Transverse colon (tissue), 4 donors: ENCODE measurements at regions of chr10 and their contacts with region 1.

Region 1: GRCh38 chr10:18594574-18595156 is 56.7 kb downstream of the NSUN6 start:
- DNase-seq: peak; percentile 11
- H3K4me3 ChIP-seq: no peak overlapping the region
- H3K27ac ChIP-seq: no peak overlapping the region
- H3K4me1 ChIP-seq: no peaks in the 10 kb centered on the region
- H3K27me3 ChIP-seq: no peaks in the 10 kb centered on the region
- CTCF ChIP-seq: peak in 2 of 5 experiments; percentile 8 to 10
- EP300 ChIP-seq: no peak
- POLR2A ChIP-seq: no peak

Region 2: DNA sequence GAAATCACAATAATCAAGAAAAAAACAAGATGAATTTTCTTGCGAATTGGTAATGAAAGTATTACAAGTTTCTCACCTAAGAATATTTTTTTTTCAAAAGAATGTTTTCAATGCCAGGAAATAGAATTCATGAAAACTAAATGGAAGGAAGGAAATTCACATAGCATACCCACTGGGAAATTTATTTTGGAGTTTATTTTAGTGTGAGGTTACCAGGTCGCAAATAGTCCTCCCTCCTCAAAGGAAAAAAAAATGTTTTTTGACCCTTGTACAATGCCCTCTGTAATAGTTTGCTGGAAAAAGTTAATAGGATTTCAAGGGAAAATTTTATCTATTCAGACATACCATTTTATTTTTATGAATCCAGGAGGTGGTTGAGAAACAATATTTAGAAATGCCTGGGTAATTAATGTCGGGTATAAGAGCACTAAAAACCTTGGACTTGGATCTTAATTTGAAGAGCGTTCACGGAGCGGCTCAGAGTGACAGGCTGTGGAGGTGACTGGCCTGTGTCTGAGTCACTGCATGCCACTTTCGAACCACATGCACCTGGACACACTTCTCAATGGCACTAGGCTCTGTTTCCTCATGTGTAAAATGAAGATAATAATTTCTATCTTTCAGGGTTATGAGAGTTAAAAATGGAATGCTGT is 1493.3 kb before region 1 on chr10:
- in situ Hi-C with region 1: no loop called
- intact Hi-C with region 1: no loop called
- DNase-seq: no peak
- H3K4me3 ChIP-seq: no peak overlapping the region
- H3K27ac ChIP-seq: no peak overlapping the region
- H3K4me1 ChIP-seq: no peaks in the 10 kb centered on the region
- H3K27me3 ChIP-seq: no peaks in the 10 kb centered on the region
- CTCF ChIP-seq: no peak
- EP300 ChIP-seq: no peak
- POLR2A ChIP-seq: no peak

Region 3: GRCh38 chr10:18532881-18533535 is 61.7 kb before region 1 on chr10:
- in situ Hi-C with region 1: loop called in 2 of 4 experiments (anchors 10 kb)
- intact Hi-C with region 1: no loop called
- DNase-seq: no peak
- H3K4me3 ChIP-seq: no peak overlapping the region
- H3K27ac ChIP-seq: no peak overlapping the region
- H3K4me1 ChIP-seq: no peaks in the 10 kb centered on the region
- H3K27me3 ChIP-seq: no peaks in the 10 kb centered on the region
- CTCF ChIP-seq: no peak
- EP300 ChIP-seq: no peak
- POLR2A ChIP-seq: no peak